Dorsolateral prefrontal cortex (tissue), 120 donors: ENCODE measurements at regions of chr5 and their contacts with region 1.

Region 1: DNA sequence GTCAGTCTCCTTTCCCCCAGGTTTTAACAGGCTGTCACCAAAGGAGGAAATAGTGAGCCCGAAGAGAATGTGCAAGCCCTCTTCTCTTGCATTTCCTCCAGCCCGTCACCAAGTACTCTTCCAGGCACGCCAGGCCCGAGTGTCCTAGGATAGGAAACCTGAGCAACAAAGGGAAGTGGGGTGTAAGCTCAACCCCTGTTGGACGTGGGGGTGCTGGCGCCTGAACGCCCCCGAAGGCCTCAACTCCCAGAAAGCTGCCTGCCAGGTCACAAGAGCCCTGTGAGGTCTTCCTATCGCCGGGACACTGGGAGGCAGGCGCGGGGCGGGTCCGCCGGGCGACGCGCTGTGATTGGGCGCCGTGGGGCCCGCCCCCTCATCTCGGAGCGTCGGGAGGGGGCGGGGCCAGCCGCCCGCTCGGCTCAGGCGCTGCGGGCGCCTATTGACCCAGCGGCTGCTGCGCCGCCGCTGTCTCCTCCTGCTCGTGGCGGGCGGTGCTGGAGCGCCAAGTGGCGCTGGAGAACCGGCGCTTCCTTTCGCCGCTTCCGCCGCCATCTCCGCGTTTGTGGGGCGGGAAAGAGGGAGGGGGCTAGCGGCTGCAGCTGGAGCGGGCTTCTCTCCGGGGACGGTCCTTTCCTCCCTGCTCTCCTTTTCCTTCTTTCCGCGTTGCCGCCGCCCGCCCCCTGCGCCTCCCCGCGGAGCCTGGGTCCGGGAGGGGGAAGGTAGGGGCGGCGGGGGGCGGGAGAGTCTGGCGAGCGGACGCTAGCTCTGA is 572 bp upstream of the MAN2A1 start:
- DNase-seq: peak; percentile 35 to 90 (median 84)
- H3K4me3 ChIP-seq: peak overlapping the region; percentile 55 to 98 (median 92)
- H3K27ac ChIP-seq: peak overlapping the region; percentile 89 to 99 (median 97)
- H3K27me3 ChIP-seq: no peaks in the 10 kb centered on the region
- CTCF ChIP-seq: peak in 29 of 56 donors; percentile 1 to 51 (median 21)

Region 2: GRCh38 chr5:109409844-109410388 is 279.2 kb before region 1 on chr5 and contains the start of gene PJA2:
- intact Hi-C with region 1: loop called (anchors 1 kb)
- DNase-seq: peak; percentile 89 to 99 (median 97)
- H3K4me3 ChIP-seq: peak within 1 kb of the TSS; percentile 66 to 98 (median 86)
- H3K27ac ChIP-seq: peak within 1 kb of the TSS; percentile 84 to 100 (median 99)
- H3K27me3 ChIP-seq: no peaks in the 10 kb centered on the region
- CTCF ChIP-seq: peak in 42 of 56 donors; percentile 8 to 58 (median 38)
- total RNA-seq, gene PJA2: 116 to 427 (median 298) TPM

Region 3: GRCh38 chr5:109589986-109590385 is 99.2 kb before region 1 on chr5:
- intact Hi-C with region 1: loop called in 1 of 2 experiments (anchors 5 kb)
- DNase-seq: no peak
- H3K4me3 ChIP-seq: no peak overlapping the region
- H3K27ac ChIP-seq: peak overlapping the region in 1 of 59 donors; percentile 25
- H3K27me3 ChIP-seq: no peaks in the 10 kb centered on the region
- CTCF ChIP-seq: peak in 8 of 56 donors; percentile 9 to 30 (median 21)

Region 4: GRCh38 chr5:109619606-109620005 is 69.5 kb before region 1 on chr5:
- intact Hi-C with region 1: loop called (anchors 2 to 5 kb)
- DNase-seq: peak in 1 of 10 donors; percentile 31
- H3K4me3 ChIP-seq: peak overlapping the region in 2 of 59 donors; percentile 3 to 13
- H3K27ac ChIP-seq: peak overlapping the region; percentile 77 to 100 (median 97)
- H3K27me3 ChIP-seq: no peaks in the 10 kb centered on the region
- CTCF ChIP-seq: no peak

Region 5: GRCh38 chr5:110625376-110625999 is 936.3 kb after region 1 on chr5:
- intact Hi-C with region 1: loop called in 1 of 2 experiments (anchors 10 kb)
- DNase-seq: no peak
- H3K4me3 ChIP-seq: peak overlapping the region in 54 of 59 donors; percentile 1 to 57 (median 41)
- H3K27ac ChIP-seq: peak overlapping the region in 3 of 59 donors; percentile 5 to 36 (median 31)
- H3K27me3 ChIP-seq: no peaks in the 10 kb centered on the region
- CTCF ChIP-seq: peak; percentile 49 to 92 (median 68)